Left colon (tissue), 2 donors: ENCODE measurements at regions of chr9 and their contacts with region 1.

Region 1: DNA sequence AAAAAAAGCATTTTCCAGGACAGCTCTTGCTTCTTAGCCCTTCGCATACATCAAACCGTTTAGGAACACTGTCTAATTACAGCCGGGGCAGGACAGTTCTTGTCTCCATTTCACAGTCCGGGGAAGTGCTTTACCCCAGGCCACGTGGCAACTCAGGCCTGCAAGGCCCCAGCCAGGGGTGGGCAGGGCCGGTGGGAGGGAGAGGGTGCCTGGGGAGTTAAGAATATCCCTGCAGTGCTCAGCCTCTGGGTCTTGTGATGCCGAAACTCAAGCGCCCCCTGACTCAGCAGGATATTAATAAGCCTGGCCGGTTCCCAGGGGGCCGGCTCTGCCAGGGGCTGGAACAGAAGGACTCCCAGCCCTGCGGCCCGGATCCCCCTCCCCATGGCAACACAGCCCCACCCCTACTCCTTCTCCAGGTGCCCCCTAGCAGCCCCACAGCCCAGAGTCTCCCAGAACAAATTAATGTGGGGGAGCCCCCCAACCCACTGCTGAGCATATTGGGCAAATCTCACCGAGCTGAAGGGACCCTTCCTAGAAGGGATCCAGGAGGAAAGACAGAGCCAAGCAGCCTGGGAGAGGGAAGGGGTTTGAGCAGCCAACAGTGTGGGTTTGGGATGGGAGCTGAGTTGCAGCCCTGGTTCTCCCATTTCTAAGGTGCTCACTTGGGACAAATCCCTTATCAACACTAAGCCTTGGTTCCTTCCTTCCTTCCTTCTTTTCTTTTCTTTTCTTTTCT is 45.3 kb downstream of the PLPP7 start:
- DNase-seq: no peak
- ATAC-seq: no peak

Region 2: GRCh38 chr9:131138676-131139075 is 196.1 kb before region 1 on chr9:
- intact Hi-C with region 1: no loop called
- DNase-seq: no peak
- ATAC-seq: no peak

Region 3: GRCh38 chr9:131178382-131178781 is 156.4 kb before region 1 on chr9:
- intact Hi-C with region 1: loop called in 1 of 2 experiments (anchors 5 kb)
- DNase-seq: peak; percentile 32 to 76
- ATAC-seq: peak; percentile 91